ENCODE measurements at regions of chr5 and their contacts with region 1.

Region 1: GRCh38 chr5:36875790-36876388 is 680 bp upstream of the NIPBL start:
- DNase-seq: peak; percentile 82
- ATAC-seq: peak; percentile 67
- H3K4me3 Mint-ChIP-seq: peak overlapping the region; percentile 88
- H3K27ac Mint-ChIP-seq: peak overlapping the region; percentile 97
- H3K4me1 Mint-ChIP-seq: peaks cover 28% of the 10 kb centered on the region
- H3K27me3 Mint-ChIP-seq: no peaks in the 10 kb centered on the region

Region 2: DNA sequence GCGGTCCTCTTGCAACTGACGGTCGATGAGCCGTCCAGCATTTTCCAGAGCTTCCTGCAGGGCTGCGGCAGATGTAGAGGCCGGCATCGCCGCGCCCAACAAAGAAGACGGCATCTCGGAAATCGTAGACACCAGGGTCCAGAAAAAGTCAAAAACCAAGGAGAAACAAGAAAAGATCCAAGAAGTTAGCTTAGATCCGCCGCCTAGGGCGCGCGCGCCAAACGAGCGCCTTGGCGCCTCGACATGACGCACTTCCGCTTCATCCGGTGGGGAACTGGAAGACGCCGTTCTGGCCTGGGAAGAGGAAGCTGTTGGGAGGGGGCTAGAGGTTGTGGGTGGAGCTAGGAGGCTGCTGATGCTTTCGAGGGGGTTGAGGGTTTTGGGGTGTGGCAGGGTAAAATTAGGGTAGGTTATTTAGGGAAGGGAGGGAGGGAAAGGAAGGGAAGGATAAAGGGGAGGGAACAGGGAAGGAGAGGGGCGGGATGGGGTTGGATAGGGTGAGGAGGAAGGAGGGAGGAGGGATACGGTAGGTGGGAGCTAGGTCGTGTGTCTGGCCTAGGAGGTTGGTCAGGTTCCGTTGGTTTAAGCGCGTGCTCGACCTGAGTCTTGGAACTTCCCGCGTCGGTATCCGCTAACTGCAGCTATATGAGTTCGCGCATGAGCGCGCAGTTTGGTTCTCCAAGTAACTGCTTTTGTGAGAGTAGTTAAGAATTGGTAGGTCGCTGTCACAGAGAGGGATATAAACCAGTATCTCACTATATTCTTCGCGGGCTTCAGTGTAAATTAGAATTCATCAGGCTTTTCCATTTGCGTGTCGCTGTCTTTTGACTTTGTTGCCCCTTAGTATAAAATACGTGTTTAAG is 495.2 kb after region 1 on chr5 and contains the start of gene NUP155:
- POLR2A ChIA-PET with region 1: interaction called, 19 read pairs
- DNase-seq: peak; percentile 85
- ATAC-seq: peak; percentile 94
- H3K4me3 Mint-ChIP-seq: peak within 1 kb of the TSS; percentile 94
- H3K27ac Mint-ChIP-seq: peak within 1 kb of the TSS; percentile 93
- H3K4me1 Mint-ChIP-seq: peaks cover 24% of the 10 kb centered on the region
- H3K27me3 Mint-ChIP-seq: no peaks in the 10 kb centered on the region
- total RNA-seq, gene NUP155: 40.7 to 43.4 TPM

Measured in activated naive CD8-positive, alpha-beta T cell treated with anti-CD3 and anti-CD28 coated beads, Interleukin-2, amount 10 ng/mL, durations not matched to agents 7 days and 5 days (primary cell).